ENCODE measurements at regions of chr6 and their contacts with region 1.

Region 1: GRCh38 chr6:137313928-137314855 is 95.0 kb upstream of the IFNGR1 start:
- DNase-seq: peak; percentile 85
- ATAC-seq: peak; percentile 84
- H3K4me3 ChIP-seq: no peak overlapping the region
- H3K4me3 Mint-ChIP-seq: no peak overlapping the region
- H3K27ac ChIP-seq: no peak overlapping the region
- H3K27ac Mint-ChIP-seq: no peak overlapping the region
- H3K4me1 ChIP-seq: peaks cover 13 to 15% of the 10 kb centered on the region in 2 donors
- H3K4me1 Mint-ChIP-seq: peaks cover 22% of the 10 kb centered on the region
- H3K27me3 ChIP-seq: no peaks in the 10 kb centered on the region
- H3K27me3 Mint-ChIP-seq: no peaks in the 10 kb centered on the region
- CTCF ChIP-seq: peak; percentile 79

Region 2: GRCh38 chr6:137089305-137089704 is 224.9 kb before region 1 on chr6:
- CTCF ChIA-PET with region 1: interaction called, 128 read pairs
- POLR2A ChIA-PET with region 1: interaction called, 9 read pairs
- intact Hi-C with region 1: loop called (anchors 1 kb)
- DNase-seq: no peak
- ATAC-seq: no peak
- H3K4me3 ChIP-seq: no peak overlapping the region
- H3K4me3 Mint-ChIP-seq: no peak overlapping the region
- H3K27ac ChIP-seq: no peak overlapping the region
- H3K27ac Mint-ChIP-seq: no peak overlapping the region
- H3K4me1 ChIP-seq: peaks cover 13 to 16% of the 10 kb centered on the region in 2 donors
- H3K4me1 Mint-ChIP-seq: peaks cover 19% of the 10 kb centered on the region
- H3K27me3 ChIP-seq: no peaks in the 10 kb centered on the region
- H3K27me3 Mint-ChIP-seq: no peaks in the 10 kb centered on the region
- CTCF ChIP-seq: no peak

Region 3: GRCh38 chr6:137165375-137166246 is 148.6 kb before region 1 on chr6:
- CTCF ChIA-PET with region 1: interaction called, 10 read pairs
- POLR2A ChIA-PET with region 1: no interaction called
- intact Hi-C with region 1: loop called (anchors 2 kb)
- DNase-seq: peak; percentile 56
- ATAC-seq: peak; percentile 67
- H3K4me3 ChIP-seq: peak overlapping the region in 1 of 5 experiments; percentile 28
- H3K4me3 Mint-ChIP-seq: peak overlapping the region; percentile 59
- H3K27ac ChIP-seq: peak overlapping the region in 1 of 2 donors; percentile 10
- H3K27ac Mint-ChIP-seq: peak overlapping the region; percentile 70
- H3K4me1 ChIP-seq: peaks cover 42 to 56% of the 10 kb centered on the region in 2 donors
- H3K4me1 Mint-ChIP-seq: peaks cover 63% of the 10 kb centered on the region
- H3K27me3 ChIP-seq: no peaks in the 10 kb centered on the region
- H3K27me3 Mint-ChIP-seq: no peaks in the 10 kb centered on the region
- CTCF ChIP-seq: no peak

Region 4: DNA sequence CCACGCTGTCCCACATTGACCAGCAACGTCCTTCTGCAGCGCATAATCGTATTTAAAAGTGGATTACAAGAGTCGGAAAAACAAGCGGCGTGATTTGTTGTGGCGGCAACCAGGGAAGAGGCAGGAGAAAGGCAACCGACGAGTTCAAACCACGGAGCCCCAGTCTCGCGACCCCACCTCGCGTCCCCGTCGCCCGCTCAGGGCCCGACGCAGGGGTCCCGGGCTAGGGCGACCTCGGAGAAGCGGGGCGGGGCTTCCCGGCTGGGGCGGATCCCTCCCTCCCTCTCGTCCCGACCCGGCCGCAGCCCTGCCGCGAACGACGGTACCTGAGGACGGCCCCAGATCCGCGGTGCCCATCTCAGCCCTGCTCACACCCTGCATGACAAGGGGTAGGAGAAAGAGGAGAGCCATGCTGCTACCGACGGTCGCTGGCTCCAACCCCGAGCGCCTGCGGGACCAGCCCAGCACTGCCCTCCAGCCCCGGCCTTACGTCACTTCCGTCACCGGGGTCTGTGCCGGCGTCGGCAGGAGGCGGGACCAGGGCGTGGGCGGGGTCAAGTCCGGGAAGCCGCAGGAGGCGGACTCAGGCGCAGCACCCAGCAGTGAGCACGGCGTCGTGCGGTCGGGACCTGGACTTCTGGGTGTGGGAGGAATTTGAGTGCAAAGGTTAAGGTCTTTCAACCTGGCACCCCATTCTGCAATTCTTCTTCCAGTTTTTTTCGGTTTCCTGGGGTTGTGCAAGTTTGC is 95.1 kb before region 1 on chr6 and contains the start of gene IFNGR1:
- CTCF ChIA-PET with region 1: interaction called, 9 read pairs
- POLR2A ChIA-PET with region 1: no interaction called
- intact Hi-C with region 1: loop called (anchors 5 kb)
- DNase-seq: peak; percentile 96
- ATAC-seq: peak; percentile 86
- H3K4me3 ChIP-seq: peak within 1 kb of the TSS; percentile 76 to 99 (median 88)
- H3K4me3 Mint-ChIP-seq: peak within 1 kb of the TSS; percentile 97
- H3K27ac ChIP-seq: peak within 1 kb of the TSS; percentile 95 to 97
- H3K27ac Mint-ChIP-seq: peak within 1 kb of the TSS; percentile 97
- H3K4me1 ChIP-seq: peaks cover 78 to 81% of the 10 kb centered on the region in 2 donors
- H3K4me1 Mint-ChIP-seq: peaks cover 79% of the 10 kb centered on the region
- H3K27me3 ChIP-seq: no peaks in the 10 kb centered on the region
- H3K27me3 Mint-ChIP-seq: no peaks in the 10 kb centered on the region
- CTCF ChIP-seq: no peak
- total RNA-seq, gene IFNGR1: 48.2 and 51.2 TPM in 2 replicates

Region 5: DNA sequence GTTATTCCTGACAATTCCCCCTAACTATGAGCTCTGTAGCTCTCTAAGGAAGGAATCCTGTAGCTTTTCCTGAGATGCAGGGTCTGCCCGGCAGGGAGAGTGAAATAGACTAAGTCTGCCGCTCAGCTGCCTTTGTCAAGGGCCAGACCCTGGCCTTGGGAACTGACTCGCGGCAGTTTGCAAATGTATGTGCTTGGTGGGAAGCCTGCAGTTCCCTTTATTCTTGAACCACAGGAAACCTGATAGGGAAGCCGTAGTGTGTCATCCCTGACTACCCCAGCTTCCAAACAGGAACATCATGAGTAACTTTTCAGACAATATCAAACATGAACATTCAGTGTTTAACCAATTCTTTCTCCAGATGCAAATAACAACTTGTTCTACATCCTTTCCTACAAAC is 16.3 kb before region 1 on chr6:
- CTCF ChIA-PET with region 1: interaction called, 11 read pairs
- POLR2A ChIA-PET with region 1: no interaction called
- intact Hi-C with region 1: no loop called
- DNase-seq: no peak
- ATAC-seq: no peak
- H3K4me3 ChIP-seq: no peak overlapping the region
- H3K4me3 Mint-ChIP-seq: no peak overlapping the region
- H3K27ac ChIP-seq: no peak overlapping the region
- H3K27ac Mint-ChIP-seq: no peak overlapping the region
- H3K4me1 ChIP-seq: no peaks in the 10 kb centered on the region
- H3K4me1 Mint-ChIP-seq: no peaks in the 10 kb centered on the region
- H3K27me3 ChIP-seq: no peaks in the 10 kb centered on the region
- H3K27me3 Mint-ChIP-seq: no peaks in the 10 kb centered on the region
- CTCF ChIP-seq: no peak

Region 6: GRCh38 chr6:137641474-137642077 is 327.4 kb after region 1 on chr6:
- CTCF ChIA-PET with region 1: interaction called, 6 read pairs
- POLR2A ChIA-PET with region 1: no interaction called
- intact Hi-C with region 1: loop called (anchors 10 kb)
- DNase-seq: peak; percentile 78
- ATAC-seq: peak; percentile 73
- H3K4me3 ChIP-seq: no peak overlapping the region
- H3K4me3 Mint-ChIP-seq: no peak overlapping the region
- H3K27ac ChIP-seq: no peak overlapping the region
- H3K27ac Mint-ChIP-seq: no peak overlapping the region
- H3K4me1 ChIP-seq: peaks cover 0 to 8% of the 10 kb centered on the region in 2 donors
- H3K4me1 Mint-ChIP-seq: peaks cover 13% of the 10 kb centered on the region
- H3K27me3 ChIP-seq: no peaks in the 10 kb centered on the region
- H3K27me3 Mint-ChIP-seq: peaks cover 9% of the 10 kb centered on the region
- CTCF ChIP-seq: peak; percentile 78

Measured in B cell (primary cell).